HCT116 (cell line): ENCODE measurements at regions of chr5 and their contacts with region 1.

Region 1: DNA sequence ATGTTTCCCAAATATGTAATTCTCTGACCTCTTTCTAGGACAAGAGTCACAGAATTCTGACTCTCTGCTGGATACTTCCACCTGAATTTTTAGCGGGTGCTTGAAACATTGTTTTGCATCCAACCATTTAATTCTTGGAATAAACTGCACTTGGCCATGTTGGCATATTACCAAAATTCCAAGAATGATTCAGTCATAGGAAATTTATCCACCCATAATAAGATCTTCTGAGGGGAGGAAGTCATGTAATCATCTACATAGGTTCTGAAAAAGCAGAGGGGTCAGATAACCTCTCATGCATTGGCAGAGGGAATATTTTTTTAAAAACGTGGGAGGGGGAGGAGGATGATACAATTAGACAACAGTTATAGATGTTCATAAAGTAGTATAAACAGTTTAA is 156.9 kb downstream of the PAM start:
- DNase-seq: peak; percentile 61
- ATAC-seq: peak; percentile 66
- H3K4me3 ChIP-seq: peak overlapping the region in 1 of 2 experiments; percentile 34; a peak in 2 of 4 replicates
- H3K27ac ChIP-seq: peak overlapping the region; percentile 76; the same call in 1 of the 2 replicates
- H3K4me1 ChIP-seq: peaks cover 44 to 55% of the 10 kb centered on the region in 2 experiments
- H3K27me3 ChIP-seq: no peaks in the 10 kb centered on the region
- CTCF ChIP-seq: no peak
- POLR2A ChIP-seq: no peak
- RAD21 ChIP-seq: 0 out of 2 replicates have a peak, but pooled peaks have one; percentile 13

Region 2: DNA sequence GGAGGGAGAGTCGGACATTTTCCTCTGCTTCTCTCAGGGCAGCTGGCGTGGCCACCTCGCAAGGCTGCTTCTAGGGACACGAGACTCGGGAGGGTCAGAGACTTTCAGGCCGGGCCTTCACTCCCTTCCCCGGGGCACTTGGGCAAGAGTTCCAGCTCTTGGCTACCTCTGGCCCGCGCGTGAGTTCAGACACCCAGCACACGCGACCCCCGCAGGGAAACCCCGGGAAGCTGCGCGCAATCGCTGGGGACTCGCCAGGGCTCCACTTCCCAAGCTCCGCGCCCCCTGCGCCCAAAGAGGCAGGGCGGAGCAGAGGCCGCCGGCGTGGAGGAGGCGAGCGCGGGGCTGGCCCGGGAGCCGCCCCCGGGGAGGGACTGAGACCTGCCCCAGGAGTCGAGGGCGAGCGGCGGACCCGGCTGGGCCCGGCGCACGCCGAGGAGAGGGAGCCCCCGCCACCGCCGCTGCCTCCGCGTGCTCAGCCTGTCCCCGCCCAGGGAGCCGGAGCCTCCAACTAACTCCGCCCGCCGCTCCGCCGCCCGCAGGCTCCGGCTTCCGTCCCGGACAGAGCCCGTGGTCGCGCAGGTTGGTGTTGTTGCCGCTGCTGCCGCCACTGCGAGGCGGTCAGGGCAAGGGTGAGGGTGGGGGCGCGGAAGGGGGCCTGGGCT is 157.1 kb before region 1 on chr5 and contains the start of gene PAM:
- CTCF ChIA-PET with region 1: no interaction called
- POLR2A ChIA-PET with region 1: no interaction called
- RAD21 ChIA-PET with region 1: no interaction called
- intact Hi-C with region 1: no loop called
- DNase-seq: no peak
- ATAC-seq: peak; percentile 85
- H3K4me3 ChIP-seq: peak within 1 kb of the TSS; percentile 95 to 99
- H3K27ac ChIP-seq: peak within 1 kb of the TSS; percentile 82
- H3K4me1 ChIP-seq: peaks cover 13 to 33% of the 10 kb centered on the region in 2 experiments
- H3K27me3 ChIP-seq: no peaks in the 10 kb centered on the region
- CTCF ChIP-seq: no peak
- POLR2A ChIP-seq: peak; percentile 60
- RAD21 ChIP-seq: no peak
- total RNA-seq, gene PAM: 257 TPM

Region 3: GRCh38 chr5:102865510-102866236 is 46.3 kb before region 1 on chr5:
- CTCF ChIA-PET with region 1: no interaction called
- POLR2A ChIA-PET with region 1: interaction called, 7 read pairs
- RAD21 ChIA-PET with region 1: no interaction called
- intact Hi-C with region 1: loop called (anchors 5 kb)
- DNase-seq: peak; percentile 86
- ATAC-seq: peak; percentile 86
- H3K4me3 ChIP-seq: peak overlapping the region; percentile 68 to 80
- H3K27ac ChIP-seq: peak overlapping the region; percentile 99
- H3K4me1 ChIP-seq: peaks cover 53 to 68% of the 10 kb centered on the region in 2 experiments
- H3K27me3 ChIP-seq: no peaks in the 10 kb centered on the region
- CTCF ChIP-seq: no peak
- POLR2A ChIP-seq: peak; percentile 54
- RAD21 ChIP-seq: 0 out of 2 replicates have a peak, but pooled peaks have one; percentile 22

Region 4: GRCh38 chr5:102889033-102889432 is 22.9 kb before region 1 on chr5:
- CTCF ChIA-PET with region 1: no interaction called
- POLR2A ChIA-PET with region 1: no interaction called
- RAD21 ChIA-PET with region 1: no interaction called
- intact Hi-C with region 1: no loop called
- DNase-seq: no peak
- ATAC-seq: no peak
- H3K4me3 ChIP-seq: no peak overlapping the region
- H3K27ac ChIP-seq: no peak overlapping the region
- H3K4me1 ChIP-seq: peaks cover 3 to 5% of the 10 kb centered on the region in 2 experiments; a peak in 2 of 4 replicates
- H3K27me3 ChIP-seq: no peaks in the 10 kb centered on the region
- CTCF ChIP-seq: no peak
- POLR2A ChIP-seq: no peak
- RAD21 ChIP-seq: no peak

Region 5: GRCh38 chr5:102959055-102959454 is 47.1 kb after region 1 on chr5:
- CTCF ChIA-PET with region 1: no interaction called
- POLR2A ChIA-PET with region 1: no interaction called
- RAD21 ChIA-PET with region 1: no interaction called
- intact Hi-C with region 1: loop called (anchors 5 kb)
- DNase-seq: peak; percentile 92
- ATAC-seq: peak; percentile 95
- H3K4me3 ChIP-seq: peak overlapping the region in 1 of 2 experiments; percentile 34; a peak in 1 of 4 replicates
- H3K27ac ChIP-seq: peak overlapping the region; percentile 94
- H3K4me1 ChIP-seq: peaks cover 60 to 67% of the 10 kb centered on the region in 2 experiments
- H3K27me3 ChIP-seq: no peaks in the 10 kb centered on the region
- CTCF ChIP-seq: no peak
- POLR2A ChIP-seq: no peak
- RAD21 ChIP-seq: peak; percentile 44